Calu3 (cell line): ENCODE measurements at regions of chrX and their contacts with region 1.

Region 1: DNA sequence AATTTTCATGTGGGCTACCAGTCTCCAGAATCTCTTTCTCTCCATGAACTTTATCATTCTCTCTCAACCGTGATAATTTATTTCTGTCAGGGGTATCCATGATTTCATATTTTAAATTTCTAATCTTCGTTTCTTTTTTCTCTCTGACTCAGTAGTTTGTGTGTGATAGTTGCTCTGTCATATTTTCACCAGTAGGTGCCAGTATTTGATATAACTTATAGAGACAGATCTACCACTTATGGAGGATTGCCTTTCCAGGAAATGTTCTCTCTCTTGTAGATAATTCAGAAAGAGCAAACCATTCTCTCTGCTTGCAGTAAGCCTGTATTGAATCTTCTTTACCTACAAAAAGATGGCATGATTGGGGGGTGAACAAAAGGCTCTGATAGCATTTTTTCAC is 79.3 kb upstream of the DYNLT3 start:
- DNase-seq: no peak
- H3K4me3 Mint-ChIP-seq: no peak overlapping the region
- H3K27ac Mint-ChIP-seq: no peak overlapping the region
- H3K4me1 Mint-ChIP-seq: peaks cover 8% of the 10 kb centered on the region
- H3K27me3 Mint-ChIP-seq: no peaks in the 10 kb centered on the region
- CTCF ChIP-seq: no peak

Region 2: GRCh38 chrX:37613933-37614332 is 312.8 kb before region 1 on chrX:
- CTCF ChIA-PET with region 1: no interaction called
- intact Hi-C with region 1: no loop called
- DNase-seq: no peak
- H3K4me3 Mint-ChIP-seq: no peak overlapping the region
- H3K27ac Mint-ChIP-seq: no peak overlapping the region
- H3K4me1 Mint-ChIP-seq: no peaks in the 10 kb centered on the region
- H3K27me3 Mint-ChIP-seq: no peaks in the 10 kb centered on the region
- CTCF ChIP-seq: no peak

Region 3: DNA sequence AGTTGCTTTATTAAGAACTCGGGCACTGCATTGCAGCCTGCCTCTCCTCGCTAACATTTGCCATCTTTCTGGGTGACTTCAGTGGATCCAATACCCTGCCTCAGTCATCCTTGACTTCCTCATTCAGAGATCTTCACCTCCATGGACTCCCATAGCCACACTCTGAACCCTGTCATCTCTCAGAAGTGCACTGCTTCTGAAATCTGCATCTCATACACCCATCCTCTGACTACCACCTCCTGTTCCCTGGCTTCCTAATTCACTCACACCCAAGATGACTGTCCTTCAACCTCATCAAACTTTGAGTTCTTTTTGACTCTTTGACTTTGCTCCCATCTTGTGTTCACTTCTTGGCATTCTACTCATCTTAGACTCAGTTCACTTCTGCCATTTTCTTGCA is 172.2 kb before region 1 on chrX:
- CTCF ChIA-PET with region 1: no interaction called
- intact Hi-C with region 1: loop called (anchors 5 kb)
- DNase-seq: no peak
- H3K4me3 Mint-ChIP-seq: no peak overlapping the region
- H3K27ac Mint-ChIP-seq: no peak overlapping the region
- H3K4me1 Mint-ChIP-seq: no peaks in the 10 kb centered on the region
- H3K27me3 Mint-ChIP-seq: no peaks in the 10 kb centered on the region
- CTCF ChIP-seq: no peak

Region 4: GRCh38 chrX:37776283-37776986 is 150.3 kb before region 1 on chrX:
- CTCF ChIA-PET with region 1: no interaction called
- intact Hi-C with region 1: no loop called
- DNase-seq: no peak
- H3K4me3 Mint-ChIP-seq: no peak overlapping the region
- H3K27ac Mint-ChIP-seq: no peak overlapping the region
- H3K4me1 Mint-ChIP-seq: no peaks in the 10 kb centered on the region
- H3K27me3 Mint-ChIP-seq: no peaks in the 10 kb centered on the region
- CTCF ChIP-seq: no peak

Region 5: GRCh38 chrX:38166478-38167083 is 239.9 kb after region 1 on chrX:
- CTCF ChIA-PET with region 1: interaction called, 4 read pairs
- intact Hi-C with region 1: loop called (anchors 1 kb)
- DNase-seq: peak; percentile 35
- H3K4me3 Mint-ChIP-seq: no peak overlapping the region
- H3K27ac Mint-ChIP-seq: no peak overlapping the region
- H3K4me1 Mint-ChIP-seq: no peaks in the 10 kb centered on the region
- H3K27me3 Mint-ChIP-seq: no peaks in the 10 kb centered on the region
- CTCF ChIP-seq: peak; percentile 33

Region 6: GRCh38 chrX:38175140-38175539 is 248.4 kb after region 1 on chrX:
- CTCF ChIA-PET with region 1: interaction called, 3 read pairs
- intact Hi-C with region 1: loop called (anchors 2 kb)
- DNase-seq: peak; percentile 56
- H3K4me3 Mint-ChIP-seq: no peak overlapping the region
- H3K27ac Mint-ChIP-seq: no peak overlapping the region
- H3K4me1 Mint-ChIP-seq: no peaks in the 10 kb centered on the region
- H3K27me3 Mint-ChIP-seq: peaks cover 4% of the 10 kb centered on the region
- CTCF ChIP-seq: peak; percentile 39